Panc1 (cell line): ENCODE measurements at regions of chr3 and their contacts with region 1.

Region 1: DNA sequence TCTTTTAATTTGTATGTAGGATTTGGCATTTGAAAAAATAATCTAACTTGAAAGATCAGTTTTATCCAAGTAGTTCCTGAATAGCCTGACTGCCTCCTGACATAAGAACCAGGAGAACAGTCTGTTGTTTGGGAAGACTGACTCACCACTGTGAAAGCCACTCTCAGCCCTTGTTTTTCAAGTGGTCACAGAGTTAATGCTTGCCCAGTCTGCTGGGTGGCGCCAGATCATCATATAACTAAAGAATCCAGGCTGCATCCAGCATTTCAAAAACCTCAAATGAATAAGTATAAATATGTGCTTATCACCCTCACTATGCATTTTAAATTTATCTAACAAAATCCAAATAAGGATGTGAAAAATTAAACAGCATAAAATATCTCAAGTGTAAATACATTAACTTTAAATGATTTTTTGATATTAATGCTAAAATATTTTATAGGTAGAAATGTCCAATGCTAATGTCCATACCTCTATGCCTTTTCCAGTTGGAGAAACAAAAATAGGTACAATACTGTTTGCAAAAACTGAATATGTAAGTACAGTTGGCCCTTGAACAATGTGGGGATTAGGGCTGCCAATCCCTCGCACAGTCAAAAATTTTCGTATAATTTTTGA is 26.9 kb upstream of the ZBBX start:
- DNase-seq: peak; percentile 15
- ATAC-seq: peak; percentile 73; the same call in 1 of the 2 replicates
- H3K4me3 ChIP-seq: no peak overlapping the region
- H3K27ac ChIP-seq: no peak overlapping the region
- H3K4me1 ChIP-seq: no peaks in the 10 kb centered on the region
- H3K27me3 ChIP-seq: no peaks in the 10 kb centered on the region
- CTCF ChIP-seq: peak; percentile 66

Region 2: GRCh38 chr3:166934879-166935278 is 472.1 kb before region 1 on chr3:
- CTCF ChIA-PET with region 1: no interaction called
- POLR2A ChIA-PET with region 1: no interaction called
- in situ Hi-C with region 1: no loop called
- intact Hi-C with region 1: no loop called
- DNase-seq: no peak
- ATAC-seq: no peak
- H3K4me3 ChIP-seq: no peak overlapping the region
- H3K27ac ChIP-seq: no peak overlapping the region
- H3K4me1 ChIP-seq: no peaks in the 10 kb centered on the region
- H3K27me3 ChIP-seq: no peaks in the 10 kb centered on the region
- CTCF ChIP-seq: no peak

Region 3: DNA sequence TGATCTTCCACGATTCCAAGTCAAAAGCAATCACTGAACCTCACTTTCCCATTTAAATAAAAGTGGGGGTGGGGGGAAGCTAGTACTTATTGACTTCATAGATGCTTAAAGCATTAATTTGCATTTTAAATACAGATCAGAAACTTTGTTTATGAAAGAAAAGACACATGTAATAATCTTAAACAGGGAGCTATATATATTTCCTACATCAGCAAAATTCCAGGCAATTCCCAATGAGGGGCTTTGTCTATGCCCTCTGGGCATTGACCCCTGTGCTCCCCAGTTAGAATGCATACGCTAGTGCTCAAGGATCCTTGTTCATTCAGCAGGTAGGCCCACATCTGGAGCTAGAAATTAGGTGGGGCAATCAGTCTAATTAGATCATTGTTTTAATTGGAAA is 46.8 kb after region 1 on chr3:
- CTCF ChIA-PET with region 1: interaction called, 10 read pairs
- POLR2A ChIA-PET with region 1: no interaction called
- in situ Hi-C with region 1: no loop called
- intact Hi-C with region 1: no loop called
- DNase-seq: no peak
- ATAC-seq: no peak
- H3K4me3 ChIP-seq: no peak overlapping the region
- H3K27ac ChIP-seq: no peak overlapping the region
- H3K4me1 ChIP-seq: no peaks in the 10 kb centered on the region
- H3K27me3 ChIP-seq: no peaks in the 10 kb centered on the region
- CTCF ChIP-seq: no peak

Region 4: GRCh38 chr3:167684388-167684993 is 277.5 kb after region 1 on chr3:
- CTCF ChIA-PET with region 1: no interaction called
- POLR2A ChIA-PET with region 1: no interaction called
- in situ Hi-C with region 1: no loop called
- intact Hi-C with region 1: loop called (anchors 5 kb)
- DNase-seq: peak; percentile 54
- ATAC-seq: peak; percentile 89
- H3K4me3 ChIP-seq: no peak overlapping the region
- H3K27ac ChIP-seq: no peak overlapping the region
- H3K4me1 ChIP-seq: no peaks in the 10 kb centered on the region
- H3K27me3 ChIP-seq: no peaks in the 10 kb centered on the region
- CTCF ChIP-seq: peak; percentile 79; the same call in 1 of the 2 replicates